ENCODE measurements at regions of chrX and their contacts with region 1.

Region 1: GRCh38 chrX:14029425-14030173 is at the start of gene GEMIN8:
- DNase-seq: peak; percentile 85 to 94 (median 90)
- ATAC-seq: peak; percentile 98
- H3K4me3 ChIP-seq: peak within 1 kb of the TSS; percentile 28
- H3K4me1 ChIP-seq: no peaks in the 10 kb centered on the region
- CTCF ChIP-seq: no peak
- total RNA-seq, gene GEMIN8: 13.5 to 15.9 (median 14.9) TPM

Region 2: DNA sequence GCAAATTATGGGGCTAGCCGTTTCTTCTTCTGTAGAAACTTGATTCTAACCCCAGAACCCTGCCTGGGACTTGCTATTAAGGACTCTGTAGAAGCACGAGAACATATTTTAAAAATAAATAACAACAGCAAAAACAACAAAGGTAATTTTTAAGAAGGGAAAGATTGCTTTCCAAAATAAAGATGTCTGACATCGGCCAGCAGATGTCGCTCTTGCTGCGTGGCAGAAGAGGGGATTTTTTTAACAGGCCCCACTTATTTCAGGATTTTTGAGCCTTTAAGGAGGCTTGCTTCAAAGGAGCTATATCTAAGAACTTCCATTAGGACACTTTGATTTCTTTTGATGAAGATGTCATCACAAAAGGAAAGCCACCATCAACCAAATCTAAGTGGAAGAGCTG is 523.0 kb before region 1 on chrX:
- intact Hi-C with region 1: loop called (anchors 5 kb)
- DNase-seq: peak in 1 of 3 donors; percentile 36
- ATAC-seq: no peak
- H3K4me3 ChIP-seq: no peak overlapping the region
- H3K4me1 ChIP-seq: no peaks in the 10 kb centered on the region
- CTCF ChIP-seq: peak; percentile 21

Region 3: DNA sequence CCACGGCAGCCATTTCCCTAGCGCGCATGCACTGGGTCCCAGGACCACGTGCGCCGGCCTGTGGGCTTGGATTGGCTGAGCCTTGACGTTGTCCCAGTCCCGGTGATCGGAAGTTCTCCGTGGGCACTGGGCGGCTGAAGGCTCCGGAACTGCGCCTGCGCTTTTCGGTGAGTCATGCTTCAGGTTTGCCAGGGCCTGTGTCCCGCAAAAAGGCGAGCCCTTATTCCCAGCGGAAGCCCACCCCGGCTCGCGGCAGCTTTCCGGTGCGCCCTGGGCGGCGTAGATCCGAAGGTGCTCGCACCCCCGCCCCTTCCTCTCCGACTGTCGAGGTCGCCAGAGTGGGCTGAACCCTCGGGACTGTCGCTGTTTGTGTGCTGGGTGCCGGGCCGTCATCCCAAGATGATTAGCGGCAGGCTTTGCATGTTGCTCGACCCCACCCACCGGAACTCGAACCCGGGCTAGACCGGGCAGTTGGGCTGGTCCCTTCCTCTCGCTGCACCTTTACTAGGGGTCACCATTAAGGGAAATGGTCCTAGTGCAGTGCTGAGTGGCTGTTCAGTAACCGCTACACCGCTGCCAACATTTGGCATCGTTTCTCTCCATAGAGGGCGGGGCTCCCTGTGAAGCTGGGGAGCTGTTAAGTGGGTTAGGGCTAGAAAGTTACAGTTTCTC is 376.4 kb before region 1 on chrX and contains the start of gene TCEANC:
- intact Hi-C with region 1: loop called in 1 of 2 experiments (anchors 10 kb)
- DNase-seq: peak; percentile 94 to 99 (median 95)
- ATAC-seq: peak; percentile 99
- H3K4me3 ChIP-seq: peak within 1 kb of the TSS; percentile 30
- H3K4me1 ChIP-seq: peaks cover 2% of the 10 kb centered on the region
- CTCF ChIP-seq: no peak
- total RNA-seq, gene TCEANC: 4.0 to 5.3 (median 4.8) TPM

Region 4: DNA sequence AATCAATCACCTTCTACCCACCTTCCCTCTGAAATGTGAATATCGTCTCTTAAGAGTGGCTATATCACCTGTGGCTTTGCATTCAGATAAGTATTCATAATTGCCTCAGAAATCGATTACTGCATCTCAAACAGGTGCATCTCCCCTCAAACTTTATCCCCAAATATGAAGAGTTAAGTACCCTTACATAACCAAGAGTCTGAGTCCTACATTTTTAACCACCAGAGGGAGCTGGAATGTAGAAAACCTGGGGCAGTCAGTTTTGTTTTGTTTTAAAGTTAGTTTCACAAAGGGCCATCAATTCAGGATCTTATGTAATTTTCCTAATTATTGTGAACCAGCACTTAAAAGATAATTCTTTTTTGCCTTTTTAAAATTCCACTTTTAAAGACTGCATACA is 371.0 kb before region 1 on chrX:
- intact Hi-C with region 1: loop called (anchors 5 to 10 kb)
- DNase-seq: peak in 1 of 3 donors; percentile 39
- ATAC-seq: peak; percentile 63
- H3K4me3 ChIP-seq: no peak overlapping the region
- H3K4me1 ChIP-seq: no peaks in the 10 kb centered on the region
- CTCF ChIP-seq: no peak

Region 5: GRCh38 chrX:13747836-13748235 is 281.8 kb before region 1 on chrX:
- intact Hi-C with region 1: loop called in 1 of 2 experiments (anchors 5 kb)
- DNase-seq: peak in 1 of 3 donors; percentile 78
- ATAC-seq: peak; percentile 84
- H3K4me3 ChIP-seq: no peak overlapping the region
- H3K4me1 ChIP-seq: no peaks in the 10 kb centered on the region
- CTCF ChIP-seq: no peak

Region 6: GRCh38 chrX:13805241-13805640 is 224.4 kb before region 1 on chrX:
- intact Hi-C with region 1: no loop called
- DNase-seq: no peak
- ATAC-seq: no peak
- H3K4me3 ChIP-seq: no peak overlapping the region
- H3K4me1 ChIP-seq: no peaks in the 10 kb centered on the region
- CTCF ChIP-seq: no peak

Measured in mucosa of descending colon (tissue), 3 donors.